A673 (cell line): ENCODE measurements at regions of chr3 and their contacts with region 1.

Region 1: GRCh38 chr3:171187706-171188290 is 161.3 kb upstream of the SLC2A2 start:
- DNase-seq: peak; percentile 50
- H3K4me3 ChIP-seq: no peak overlapping the region
- H3K27ac ChIP-seq: no peak overlapping the region
- H3K4me1 ChIP-seq: no peaks in the 10 kb centered on the region
- H3K27me3 ChIP-seq: no peaks in the 10 kb centered on the region
- CTCF ChIP-seq: peak; percentile 69

Region 2: GRCh38 chr3:170961616-170962400 is 226.0 kb before region 1 on chr3:
- CTCF ChIA-PET with region 1: interaction called, 3 read pairs
- POLR2A ChIA-PET with region 1: no interaction called
- intact Hi-C with region 1: loop called (anchors 5 kb)
- DNase-seq: peak; percentile 41
- H3K4me3 ChIP-seq: no peak overlapping the region
- H3K27ac ChIP-seq: no peak overlapping the region
- H3K4me1 ChIP-seq: no peaks in the 10 kb centered on the region
- H3K27me3 ChIP-seq: no peaks in the 10 kb centered on the region
- CTCF ChIP-seq: peak; percentile 70

Region 3: GRCh38 chr3:171168086-171168485 is 19.7 kb before region 1 on chr3:
- CTCF ChIA-PET with region 1: interaction called, 10 read pairs
- POLR2A ChIA-PET with region 1: no interaction called
- intact Hi-C with region 1: no loop called
- DNase-seq: peak; percentile 17
- H3K4me3 ChIP-seq: no peak overlapping the region
- H3K27ac ChIP-seq: no peak overlapping the region
- H3K4me1 ChIP-seq: no peaks in the 10 kb centered on the region
- H3K27me3 ChIP-seq: no peaks in the 10 kb centered on the region
- CTCF ChIP-seq: 0 out of 2 replicates have a peak, but pooled peaks have one; percentile 18

Region 4: DNA sequence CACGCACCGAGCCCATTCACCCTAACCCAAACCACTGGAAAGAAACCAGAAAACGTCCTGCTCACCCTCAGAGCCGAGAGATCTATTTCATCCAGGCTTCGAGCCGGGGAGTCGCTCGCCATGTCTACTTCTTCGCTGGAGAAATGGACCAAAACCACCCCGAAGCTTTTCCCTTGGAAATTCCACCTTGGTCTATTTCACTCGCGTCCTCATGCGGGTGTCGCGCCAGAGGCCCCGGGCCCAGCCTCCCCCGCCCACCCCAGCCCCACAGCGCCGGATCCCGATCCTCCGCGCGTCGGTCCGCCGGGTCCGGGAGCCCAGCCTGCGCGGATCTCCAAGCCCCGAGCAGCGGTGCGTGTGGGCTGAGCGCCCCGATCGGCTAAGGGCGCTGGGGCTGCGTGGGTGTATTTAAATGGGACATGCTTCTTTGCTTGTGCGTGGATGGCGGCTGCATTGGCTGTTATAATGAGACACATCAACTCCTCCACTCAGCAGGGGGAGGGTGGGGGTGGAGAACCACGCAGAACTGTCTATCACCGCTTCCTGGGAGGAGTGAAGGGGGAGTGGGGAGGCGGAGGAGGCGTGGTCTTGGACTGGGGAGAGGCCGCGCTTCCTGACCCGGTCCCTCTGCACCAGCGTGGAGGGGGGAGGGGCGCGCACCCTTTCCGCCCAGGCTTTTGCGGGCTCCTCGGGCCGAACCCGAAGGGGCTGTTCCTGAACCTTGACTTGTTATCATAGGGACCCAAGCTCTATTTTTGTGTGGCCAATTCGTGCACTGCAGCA is 272.3 kb after region 1 on chr3 and contains the start of gene TNIK:
- CTCF ChIA-PET with region 1: no interaction called
- POLR2A ChIA-PET with region 1: no interaction called
- intact Hi-C with region 1: loop called (anchors 5 kb)
- DNase-seq: peak; percentile 81
- H3K4me3 ChIP-seq: peak within 1 kb of the TSS; percentile 58
- H3K27ac ChIP-seq: no peak within 1 kb of the TSS
- H3K4me1 ChIP-seq: peaks cover 5% of the 10 kb centered on the region
- H3K27me3 ChIP-seq: peaks cover 12% of the 10 kb centered on the region
- CTCF ChIP-seq: no peak; the same call in 1 of the 2 replicates
- total RNA-seq, gene TNIK: 0.69 and 1.5 TPM in 2 replicates

Region 5: DNA sequence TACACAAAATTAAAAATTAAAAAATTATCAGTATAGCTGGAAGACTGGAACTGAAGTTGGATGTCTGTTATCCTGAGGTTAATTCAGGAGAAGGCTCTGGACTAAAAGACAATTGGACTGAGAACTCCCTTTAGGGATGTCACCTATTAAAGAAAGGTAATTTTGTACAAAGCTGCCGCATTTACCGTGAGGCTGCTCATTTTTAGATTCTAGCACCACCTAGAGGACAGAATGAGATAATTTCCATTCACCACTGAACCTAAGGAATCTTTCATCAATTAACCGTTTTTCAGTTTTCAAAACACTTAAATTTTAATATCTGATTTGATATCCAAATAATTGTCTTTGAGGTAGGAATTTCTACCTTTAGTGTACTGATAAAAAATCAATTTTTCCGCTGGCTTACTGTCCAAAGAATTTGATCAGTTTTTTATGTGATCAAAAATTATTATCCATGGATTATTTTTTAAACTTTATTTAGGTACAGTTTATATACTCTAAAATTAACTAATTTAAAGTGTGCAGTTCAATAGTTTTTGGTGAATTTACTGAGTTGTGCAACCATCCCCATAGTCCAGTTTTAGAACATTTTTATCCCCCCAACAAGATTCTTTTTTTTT is 379.1 kb after region 1 on chr3:
- CTCF ChIA-PET with region 1: interaction called, 3 read pairs
- POLR2A ChIA-PET with region 1: no interaction called
- intact Hi-C with region 1: loop called (anchors 2 kb)
- DNase-seq: peak; percentile 56
- H3K4me3 ChIP-seq: no peak overlapping the region
- H3K27ac ChIP-seq: no peak overlapping the region
- H3K4me1 ChIP-seq: no peaks in the 10 kb centered on the region
- H3K27me3 ChIP-seq: no peaks in the 10 kb centered on the region
- CTCF ChIP-seq: peak; percentile 77

Region 6: GRCh38 chr3:171932153-171932611 is 744.4 kb after region 1 on chr3:
- CTCF ChIA-PET with region 1: no interaction called
- POLR2A ChIA-PET with region 1: no interaction called
- intact Hi-C with region 1: no loop called
- DNase-seq: no peak
- H3K4me3 ChIP-seq: no peak overlapping the region
- H3K27ac ChIP-seq: no peak overlapping the region
- H3K4me1 ChIP-seq: no peaks in the 10 kb centered on the region
- H3K27me3 ChIP-seq: no peaks in the 10 kb centered on the region
- CTCF ChIP-seq: no peak